Panc1 (cell line): ENCODE measurements at regions of chr3 and their contacts with region 1.

Region 1: DNA sequence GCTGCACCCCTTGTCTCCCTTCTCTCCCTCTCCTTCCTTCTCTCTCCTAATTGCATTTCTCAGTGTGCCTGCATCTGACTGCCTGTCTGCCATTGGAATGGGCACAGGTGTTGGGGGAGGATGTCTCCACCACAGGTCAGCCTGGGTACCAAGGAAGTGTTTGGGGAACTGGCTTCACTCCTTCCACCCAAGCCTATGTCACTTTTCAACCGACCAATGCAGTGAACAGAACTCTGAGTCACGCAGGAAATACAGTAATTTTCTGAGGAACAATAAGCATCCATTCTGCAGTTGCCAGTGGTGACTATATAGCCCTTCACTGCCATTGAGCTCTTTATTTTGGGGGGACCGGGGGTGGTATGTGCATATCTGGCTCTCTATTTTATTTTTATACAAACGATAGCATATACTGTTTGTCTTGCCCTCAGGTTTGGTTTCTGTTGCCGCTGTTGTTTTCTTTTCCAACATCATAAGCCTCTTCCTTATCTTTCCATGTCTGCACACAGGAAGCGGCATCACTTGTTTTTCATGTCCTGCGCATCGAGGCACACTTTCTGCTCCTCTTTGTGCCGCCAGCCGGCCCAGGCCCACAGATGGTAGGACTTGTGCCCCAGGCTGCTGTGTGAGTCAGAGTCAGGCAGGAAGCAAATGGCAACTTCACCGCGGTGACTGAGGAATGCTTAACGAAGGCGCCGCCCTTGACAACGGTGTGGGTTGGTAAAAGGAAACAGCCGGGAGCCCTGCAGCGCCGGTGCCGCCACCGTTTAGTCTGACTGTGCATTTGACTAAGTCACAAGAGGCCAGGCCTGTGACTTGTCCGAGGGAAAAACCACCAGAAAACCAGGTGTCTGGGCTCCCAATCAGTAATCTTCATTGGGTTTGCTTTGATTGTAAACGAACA is 21.1 kb upstream of the CDCP1 start:
- DNase-seq: peak; percentile 81
- ATAC-seq: peak; percentile 99
- H3K4me3 ChIP-seq: peak overlapping the region; percentile 18 to 27; a peak in 3 of 4 replicates
- H3K27ac ChIP-seq: peak overlapping the region; percentile 86
- H3K4me1 ChIP-seq: peaks cover 19% of the 10 kb centered on the region
- H3K27me3 ChIP-seq: no peaks in the 10 kb centered on the region
- CTCF ChIP-seq: no peak

Region 2: DNA sequence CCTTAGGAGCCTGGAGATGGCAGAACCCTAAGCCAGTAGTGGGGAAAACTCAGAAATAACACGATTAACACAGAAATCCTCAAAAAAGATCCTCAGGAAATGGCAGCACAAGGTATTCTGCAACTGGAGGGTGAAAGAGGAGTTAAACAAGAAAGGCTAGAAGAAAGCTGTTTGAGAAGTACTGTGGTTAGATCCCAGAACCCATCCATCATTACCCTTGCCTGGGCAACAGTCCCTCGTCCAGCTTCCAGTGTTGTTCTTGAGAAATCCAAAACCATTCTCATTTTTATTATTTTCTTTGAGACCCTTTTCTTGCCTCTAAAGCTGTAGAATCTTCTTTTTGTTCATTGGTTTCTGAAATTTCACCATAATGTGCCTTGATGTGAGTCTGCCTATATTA is 18.3 kb before region 1 on chr3:
- CTCF ChIA-PET with region 1: no interaction called
- POLR2A ChIA-PET with region 1: interaction called, 11 read pairs
- in situ Hi-C with region 1: no loop called
- intact Hi-C with region 1: no loop called
- DNase-seq: no peak
- ATAC-seq: no peak
- H3K4me3 ChIP-seq: no peak overlapping the region
- H3K27ac ChIP-seq: no peak overlapping the region
- H3K4me1 ChIP-seq: peaks cover 8% of the 10 kb centered on the region
- H3K27me3 ChIP-seq: no peaks in the 10 kb centered on the region
- CTCF ChIP-seq: no peak